Cardiac septum (tissue), 1 donor: ENCODE measurements at regions of chr1 and their contacts with region 1.

Region 1: DNA sequence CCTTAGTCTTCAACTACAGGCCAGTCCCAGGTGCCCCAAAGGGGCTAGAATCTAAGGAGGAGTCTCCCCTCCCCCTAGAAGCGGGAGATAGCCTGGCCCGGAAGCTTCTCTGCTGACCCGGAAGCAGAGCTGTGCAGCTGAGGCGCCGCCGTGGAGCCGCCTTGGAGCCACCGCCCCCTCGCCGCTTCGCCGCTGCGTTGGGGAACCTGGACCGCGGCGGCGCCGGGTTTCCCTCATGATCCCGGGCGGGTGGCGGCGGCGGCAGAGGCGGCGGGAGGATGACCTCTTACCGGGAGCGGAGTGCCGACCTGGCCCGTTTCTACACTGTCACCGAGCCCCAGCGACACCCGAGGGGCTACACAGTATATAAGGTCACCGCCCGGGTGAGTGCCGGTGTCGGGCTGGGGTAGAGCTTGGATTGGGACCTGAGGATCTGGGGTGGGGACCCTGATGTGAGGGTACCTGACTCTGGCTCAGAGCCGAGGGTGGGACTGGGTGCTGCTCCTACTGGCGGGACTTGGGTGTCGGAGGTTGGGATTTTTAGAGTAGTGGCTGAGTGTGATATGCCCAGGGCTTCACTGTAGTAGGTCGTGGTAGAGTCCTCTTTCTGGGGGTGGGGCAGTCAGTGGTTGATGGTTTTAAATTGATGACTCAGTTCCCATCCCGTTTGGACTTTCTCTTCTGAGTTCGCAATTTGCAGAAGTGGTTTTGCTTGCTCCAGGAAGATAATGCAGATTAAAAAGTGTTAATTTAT is at the start of gene RPS6KC1:
- DNase-seq: peak; percentile 94
- total RNA-seq, gene RPS6KC1: 12.7 TPM

Region 2: DNA sequence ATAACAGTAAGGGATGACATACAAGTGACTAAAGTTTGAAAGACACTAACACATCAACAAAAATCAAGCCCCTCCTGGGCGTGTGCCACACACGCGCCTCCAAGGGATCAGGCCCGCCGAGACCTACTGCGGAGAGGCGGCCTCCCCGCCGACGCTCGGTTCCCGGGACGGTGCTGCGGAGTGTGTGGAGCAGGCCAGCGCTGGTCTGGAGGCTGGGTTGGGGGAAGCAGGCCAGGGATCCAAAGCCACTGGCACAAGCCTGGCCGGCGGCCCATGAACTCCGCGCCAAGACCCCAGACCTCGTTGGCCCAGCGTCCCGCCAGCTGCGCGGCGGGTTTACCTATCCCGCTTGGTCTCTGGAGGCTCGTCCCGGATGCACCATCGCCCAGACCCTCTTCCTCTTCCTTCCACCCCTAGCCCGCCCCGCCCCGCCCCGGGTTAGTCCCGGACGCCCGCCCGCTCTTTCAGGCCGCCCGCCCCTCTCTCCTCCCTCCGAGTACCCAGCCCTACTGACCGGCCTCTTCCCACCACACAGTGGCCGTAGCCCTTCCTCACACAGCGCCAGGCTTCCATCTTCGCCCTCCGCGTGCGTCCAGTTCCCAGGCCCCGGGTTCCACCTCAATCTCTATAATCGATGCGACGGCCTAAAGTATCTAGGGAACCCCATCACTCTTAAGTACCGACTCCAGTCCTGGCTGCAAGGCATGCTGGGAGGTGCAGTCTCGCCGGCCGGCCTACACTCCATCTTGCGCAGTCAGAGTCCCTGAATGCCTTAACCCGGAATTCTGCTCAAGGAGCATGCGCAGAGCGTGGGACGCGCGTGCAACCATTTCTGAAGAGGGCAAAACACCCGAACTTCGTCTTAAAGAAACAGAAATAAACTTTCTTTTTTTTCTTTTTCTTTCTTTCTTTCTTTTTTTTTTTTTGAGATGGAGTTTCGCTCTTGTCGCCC is 35.9 kb before region 1 on chr1 and contains the start of gene ANGEL2:
- intact Hi-C with region 1: loop called (anchors 2 kb)
- DNase-seq: peak; percentile 98
- total RNA-seq, gene ANGEL2: 17.8 TPM

Region 3: DNA sequence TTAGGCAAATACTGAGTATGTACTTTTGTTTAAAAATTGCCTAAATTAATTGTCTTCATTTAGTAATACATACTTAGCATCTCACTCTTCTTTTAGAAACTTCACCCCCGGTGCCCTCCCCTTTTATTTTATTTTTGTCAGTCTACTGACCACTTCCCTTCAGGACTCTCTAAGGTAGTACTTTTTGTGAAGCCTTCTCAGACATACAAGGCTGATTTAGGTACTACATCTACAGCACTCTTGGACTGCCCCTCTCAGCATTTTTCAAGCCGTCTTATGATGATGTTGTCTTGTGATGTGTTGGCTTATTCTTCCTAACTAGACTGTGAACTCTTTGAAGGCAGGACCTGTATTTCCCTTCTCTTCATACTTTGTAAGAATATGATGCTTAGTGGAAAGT is 24.4 kb after region 1 on chr1:
- intact Hi-C with region 1: no loop called
- DNase-seq: no peak